ENCODE measurements at regions of chr15 and their contacts with region 1.

Region 1: DNA sequence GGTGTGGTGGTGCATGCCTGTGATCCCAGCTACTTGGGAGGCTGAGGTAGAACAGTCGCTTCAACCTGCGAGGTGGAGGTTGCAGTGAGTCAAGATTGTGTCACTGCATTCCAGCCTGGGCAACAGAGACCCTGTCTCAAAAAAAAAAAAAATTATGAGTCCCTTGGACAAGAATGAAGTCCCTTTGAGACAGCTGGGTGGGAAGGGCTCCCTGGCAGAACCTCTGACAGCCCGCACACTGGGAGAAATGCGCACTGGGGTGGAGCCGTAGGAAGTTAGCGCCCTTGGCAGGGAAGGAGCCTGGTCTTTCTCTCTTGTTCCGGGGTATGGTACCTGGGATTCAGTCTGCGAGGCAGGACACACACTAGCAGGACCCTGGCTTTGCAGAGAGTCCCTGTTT is 51.4 kb downstream of the SLC30A4 start:
- DNase-seq: no peak
- ATAC-seq: no peak
- H3K4me3 ChIP-seq: no peak overlapping the region
- H3K27ac ChIP-seq: no peak overlapping the region
- H3K4me1 ChIP-seq: no peaks in the 10 kb centered on the region
- H3K27me3 ChIP-seq: no peaks in the 10 kb centered on the region
- CTCF ChIP-seq: no peak

Region 2: DNA sequence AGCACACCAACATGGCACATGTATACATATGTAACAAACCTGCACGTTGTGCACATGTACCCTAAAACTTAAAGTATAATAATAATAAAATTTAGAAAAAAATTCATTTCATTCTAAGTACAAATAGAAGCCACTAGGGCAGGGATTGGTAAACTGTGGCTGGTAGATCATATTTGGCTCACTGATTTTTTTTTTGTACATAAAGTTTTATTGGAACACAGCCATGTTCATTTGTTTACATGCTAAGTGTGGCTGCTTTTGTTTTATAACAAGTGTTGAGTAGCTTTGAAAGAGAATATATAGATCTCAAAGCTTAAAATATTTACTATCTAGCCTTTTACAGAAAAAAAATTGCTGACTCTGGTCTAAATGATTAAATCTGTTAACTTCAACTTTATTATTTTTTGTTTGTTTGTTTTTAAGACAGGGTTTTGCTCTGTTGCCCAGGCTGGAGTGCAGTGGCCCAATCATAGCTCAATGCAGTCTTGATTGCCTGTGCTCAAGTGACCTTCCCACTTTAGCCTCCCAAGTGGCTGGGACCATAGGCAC is 18.6 kb after region 1 on chr15:
- CTCF ChIA-PET with region 1: interaction called, 22 read pairs
- POLR2A ChIA-PET with region 1: no interaction called
- in situ Hi-C with region 1: no loop called
- intact Hi-C with region 1: no loop called
- DNase-seq: no peak
- ATAC-seq: no peak
- H3K4me3 ChIP-seq: no peak overlapping the region
- H3K27ac ChIP-seq: no peak overlapping the region
- H3K4me1 ChIP-seq: no peaks in the 10 kb centered on the region
- H3K27me3 ChIP-seq: no peaks in the 10 kb centered on the region
- CTCF ChIP-seq: no peak

Region 3: DNA sequence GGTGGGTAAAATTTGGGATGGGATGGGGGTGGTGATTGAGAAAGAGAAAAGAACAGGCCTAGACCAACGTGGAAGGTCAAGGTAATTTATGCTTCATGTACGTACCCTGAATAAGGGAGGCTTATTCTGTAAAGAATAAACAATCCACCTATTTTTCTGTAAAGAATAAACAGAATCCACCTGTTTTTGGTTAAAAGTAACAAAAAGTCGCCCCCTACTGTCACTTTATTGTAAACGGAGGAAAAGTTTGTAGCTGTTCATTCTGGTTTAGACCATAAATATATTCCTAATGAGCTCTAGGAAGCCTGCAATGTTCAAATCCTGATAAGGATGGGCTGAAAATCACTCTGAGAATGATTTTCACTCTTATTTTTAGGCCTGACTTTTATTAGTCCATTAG is 140.2 kb after region 1 on chr15:
- CTCF ChIA-PET with region 1: no interaction called
- POLR2A ChIA-PET with region 1: no interaction called
- in situ Hi-C with region 1: no loop called
- intact Hi-C with region 1: loop called (anchors 5 kb)
- DNase-seq: no peak
- ATAC-seq: no peak
- H3K4me3 ChIP-seq: no peak overlapping the region
- H3K27ac ChIP-seq: no peak overlapping the region
- H3K4me1 ChIP-seq: peaks cover 7% of the 10 kb centered on the region; the same call in 1 of the 2 replicates
- H3K27me3 ChIP-seq: no peaks in the 10 kb centered on the region
- CTCF ChIP-seq: peak; percentile 65

Measured in Panc1 (cell line).